ENCODE measurements at regions of chr1 and their contacts with region 1.

Region 1: DNA sequence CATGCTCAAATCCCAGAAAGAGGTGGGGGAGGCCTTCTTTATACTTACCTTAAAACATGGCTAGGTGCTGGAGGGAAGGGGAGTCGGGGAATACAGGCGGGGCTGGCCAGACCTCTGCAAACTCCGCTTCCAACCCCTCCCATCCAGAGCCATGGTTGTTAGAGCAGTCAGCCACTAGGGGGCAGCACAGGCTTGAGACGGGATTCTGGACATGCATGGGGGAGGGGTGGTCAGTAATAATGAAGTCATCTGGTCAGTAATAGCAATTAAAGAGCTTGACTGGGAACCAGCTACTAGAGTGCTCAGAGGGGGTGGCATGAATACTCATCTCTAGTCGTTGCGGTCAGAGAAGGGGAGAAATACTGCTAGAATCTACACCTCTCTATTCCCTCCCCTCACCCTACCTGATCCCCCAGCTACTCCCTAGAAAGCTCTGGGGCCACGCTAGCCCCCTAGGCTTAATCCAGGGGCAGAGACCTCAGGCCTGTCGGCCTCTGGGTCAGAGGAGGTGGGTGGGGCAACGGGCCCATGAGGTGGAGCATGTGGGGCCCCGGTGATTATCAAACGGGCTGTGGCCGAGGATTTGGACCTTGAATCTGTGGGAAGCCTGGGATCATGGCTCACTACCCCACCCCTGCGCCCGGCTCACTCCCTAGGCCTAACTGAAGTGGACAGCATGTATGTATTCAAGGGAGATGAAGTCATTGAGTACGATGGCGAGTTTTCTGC is 2.9 kb downstream of the CASQ1 start:
- DNase-seq: peak; percentile 86
- H3K4me3 Mint-ChIP-seq: no peak overlapping the region
- H3K27ac Mint-ChIP-seq: no peak overlapping the region
- H3K4me1 Mint-ChIP-seq: no peaks in the 10 kb centered on the region
- H3K27me3 Mint-ChIP-seq: peaks cover 19% of the 10 kb centered on the region

Region 2: DNA sequence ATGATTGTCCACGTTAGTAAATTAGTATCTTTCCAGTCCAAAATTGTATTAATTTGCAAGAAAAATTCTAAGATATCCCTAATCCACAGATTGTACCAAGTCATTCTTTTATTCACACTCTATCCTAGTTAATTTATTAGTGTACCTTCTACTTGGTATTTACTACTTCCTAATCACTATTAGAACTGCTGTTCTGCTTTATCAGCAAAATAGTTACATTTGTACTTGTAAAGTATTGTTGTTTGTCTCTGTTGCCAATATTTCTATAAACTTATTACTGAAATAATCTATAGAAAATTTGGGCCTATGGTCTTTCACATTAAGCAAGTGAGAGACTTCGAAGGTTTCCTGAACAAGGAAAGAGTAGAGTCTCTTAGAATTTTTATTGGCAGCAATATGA is 473.3 kb before region 1 on chr1:
- CTCF ChIA-PET with region 1: no interaction called
- DNase-seq: no peak
- H3K4me3 Mint-ChIP-seq: no peak overlapping the region
- H3K27ac Mint-ChIP-seq: no peak overlapping the region
- H3K4me1 Mint-ChIP-seq: no peaks in the 10 kb centered on the region
- H3K27me3 Mint-ChIP-seq: peaks cover 9% of the 10 kb centered on the region

Region 3: DNA sequence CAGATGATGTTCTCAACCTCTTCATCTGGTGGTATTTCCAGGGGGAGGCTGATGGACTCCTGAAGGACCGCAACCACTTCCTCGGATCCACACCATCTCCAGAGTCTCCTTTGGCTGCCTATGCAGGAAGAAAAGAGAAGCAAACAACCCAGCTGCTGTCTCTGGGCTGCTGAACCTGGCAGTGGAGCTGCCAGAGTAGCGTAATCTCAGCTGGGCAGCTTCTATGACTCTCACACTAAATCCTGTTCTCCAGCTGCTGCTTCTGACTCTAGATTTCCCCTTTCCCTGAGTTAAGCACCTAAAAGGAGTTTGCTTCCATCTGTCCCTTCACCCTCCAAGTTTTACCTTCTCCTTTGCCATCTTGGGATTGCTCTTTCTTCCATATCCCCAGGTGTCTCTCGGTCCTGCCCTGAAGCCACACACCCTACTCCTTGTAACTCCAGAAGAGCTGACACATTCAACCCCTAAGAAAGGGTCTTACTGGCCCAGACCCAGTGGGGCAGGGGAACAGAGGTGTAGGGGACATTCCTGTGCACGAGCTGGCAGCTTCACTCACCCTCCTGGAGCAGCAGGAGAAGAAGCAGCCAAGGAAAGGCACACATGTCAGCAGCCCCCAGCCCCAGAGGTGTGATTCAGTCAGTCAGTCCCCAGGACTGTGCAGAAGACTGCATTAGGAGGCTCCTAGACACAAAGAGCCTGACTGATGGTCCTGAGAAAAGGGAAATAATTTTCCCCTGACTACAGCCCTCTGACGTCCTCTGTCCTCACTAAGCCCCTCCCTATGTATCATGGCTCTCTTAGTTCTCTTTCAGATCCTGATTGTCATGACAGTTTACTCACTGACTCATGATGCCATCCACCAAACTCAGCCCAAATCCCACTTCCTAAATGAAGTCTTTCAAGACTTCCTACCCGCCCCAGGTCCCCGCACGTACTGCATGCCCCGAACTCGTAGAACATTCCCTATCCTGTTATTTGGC is 239.4 kb before region 1 on chr1 and contains the start of gene SLAMF9:
- CTCF ChIA-PET with region 1: no interaction called
- DNase-seq: no peak
- H3K4me3 Mint-ChIP-seq: no peak within 1 kb of the TSS
- H3K27ac Mint-ChIP-seq: no peak within 1 kb of the TSS
- H3K4me1 Mint-ChIP-seq: no peaks in the 10 kb centered on the region
- H3K27me3 Mint-ChIP-seq: peaks cover 51% of the 10 kb centered on the region

Region 4: DNA sequence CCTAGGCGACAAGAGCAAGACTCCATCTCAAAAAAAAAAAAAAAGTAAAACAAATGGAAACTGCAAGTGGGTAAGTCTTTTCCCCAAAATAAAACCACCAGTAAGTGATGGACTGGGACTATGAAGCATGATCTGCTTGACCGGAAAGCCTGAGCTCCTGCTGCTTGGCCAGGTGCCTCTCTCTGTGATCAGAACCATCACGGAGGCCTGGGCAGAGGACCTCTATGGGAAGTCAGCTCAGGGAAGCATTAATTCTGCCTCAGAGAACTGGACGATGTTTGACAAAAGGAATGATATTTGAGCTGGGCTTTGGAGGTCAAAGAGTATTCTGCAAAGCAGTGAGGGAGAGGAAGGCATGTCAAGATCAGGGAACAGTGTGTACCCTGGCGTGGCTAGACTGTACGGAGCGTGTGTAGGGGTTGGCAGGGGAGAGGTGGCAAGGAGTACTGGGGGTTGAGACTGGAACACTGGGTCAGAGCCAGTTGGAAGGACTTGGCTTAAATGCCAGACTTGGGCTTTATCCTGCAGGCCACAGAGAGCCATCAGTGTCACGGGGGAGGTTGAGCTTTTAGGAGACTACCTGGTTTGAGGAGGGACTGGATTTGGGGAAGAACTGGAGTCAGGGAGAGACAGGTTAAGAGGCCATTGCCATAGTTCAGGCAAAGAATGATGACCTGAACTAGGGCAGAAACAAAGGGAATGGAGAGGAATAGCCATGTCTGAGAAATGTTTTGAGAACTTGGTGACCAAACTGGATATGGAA is 61.3 kb before region 1 on chr1:
- CTCF ChIA-PET with region 1: no interaction called
- DNase-seq: no peak
- H3K4me3 Mint-ChIP-seq: no peak overlapping the region
- H3K27ac Mint-ChIP-seq: no peak overlapping the region
- H3K4me1 Mint-ChIP-seq: no peaks in the 10 kb centered on the region
- H3K27me3 Mint-ChIP-seq: peaks cover 44% of the 10 kb centered on the region

Region 5: DNA sequence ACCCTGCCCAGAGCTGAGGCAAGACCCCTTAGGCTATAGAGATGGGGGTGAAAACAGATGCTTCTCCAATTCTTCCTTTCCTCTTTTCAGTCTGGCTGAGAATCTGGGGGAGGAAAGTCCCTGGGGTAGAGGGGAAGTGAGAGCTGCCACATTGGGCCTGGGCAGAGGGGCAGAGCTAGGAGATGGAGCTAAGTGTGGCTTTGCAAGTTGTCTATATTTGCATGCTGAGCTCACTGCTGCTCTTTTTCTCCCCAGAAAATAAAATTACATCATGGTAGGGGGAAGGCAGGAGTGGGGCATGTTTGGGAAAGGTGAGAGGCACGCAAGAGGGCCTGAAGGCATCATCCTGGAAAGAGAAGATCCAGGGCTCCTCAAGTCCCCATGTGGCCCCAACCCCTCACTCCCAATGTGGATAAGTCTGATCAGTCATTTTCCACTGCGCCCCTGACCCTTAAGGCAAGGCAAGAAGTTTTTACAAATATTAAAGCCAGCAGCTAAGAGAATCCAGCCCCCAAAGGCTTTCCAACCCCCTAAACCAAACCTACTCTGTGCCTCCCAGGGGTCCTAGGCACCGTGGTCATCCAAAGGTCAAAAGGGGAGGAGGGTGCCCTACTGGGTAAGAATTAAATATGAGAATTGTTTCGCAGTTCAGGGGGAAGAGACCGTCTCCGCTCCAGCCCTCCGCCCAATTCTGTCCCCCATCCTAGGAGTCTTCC is 11.4 kb after region 1 on chr1:
- CTCF ChIA-PET with region 1: interaction called, 20 read pairs
- DNase-seq: no peak
- H3K4me3 Mint-ChIP-seq: peak overlapping the region; percentile 88
- H3K27ac Mint-ChIP-seq: peak overlapping the region; percentile 22
- H3K4me1 Mint-ChIP-seq: peaks cover 30% of the 10 kb centered on the region
- H3K27me3 Mint-ChIP-seq: no peaks in the 10 kb centered on the region

Region 6: GRCh38 chr1:160219062-160219929 is 26.0 kb after region 1 on chr1:
- CTCF ChIA-PET with region 1: interaction called, 10 read pairs
- DNase-seq: no peak
- H3K4me3 Mint-ChIP-seq: no peak overlapping the region
- H3K27ac Mint-ChIP-seq: peak overlapping the region; percentile 15
- H3K4me1 Mint-ChIP-seq: no peaks in the 10 kb centered on the region
- H3K27me3 Mint-ChIP-seq: no peaks in the 10 kb centered on the region

Region 7: GRCh38 chr1:160675641-160676410 is 482.6 kb after region 1 on chr1:
- CTCF ChIA-PET with region 1: no interaction called
- DNase-seq: peak; percentile 85
- H3K4me3 Mint-ChIP-seq: no peak overlapping the region
- H3K27ac Mint-ChIP-seq: peak overlapping the region; percentile 79
- H3K4me1 Mint-ChIP-seq: peaks cover 28% of the 10 kb centered on the region
- H3K27me3 Mint-ChIP-seq: no peaks in the 10 kb centered on the region